K562 (cell line): ENCODE measurements at regions of chr14 and their contacts with region 1.

Region 1: DNA sequence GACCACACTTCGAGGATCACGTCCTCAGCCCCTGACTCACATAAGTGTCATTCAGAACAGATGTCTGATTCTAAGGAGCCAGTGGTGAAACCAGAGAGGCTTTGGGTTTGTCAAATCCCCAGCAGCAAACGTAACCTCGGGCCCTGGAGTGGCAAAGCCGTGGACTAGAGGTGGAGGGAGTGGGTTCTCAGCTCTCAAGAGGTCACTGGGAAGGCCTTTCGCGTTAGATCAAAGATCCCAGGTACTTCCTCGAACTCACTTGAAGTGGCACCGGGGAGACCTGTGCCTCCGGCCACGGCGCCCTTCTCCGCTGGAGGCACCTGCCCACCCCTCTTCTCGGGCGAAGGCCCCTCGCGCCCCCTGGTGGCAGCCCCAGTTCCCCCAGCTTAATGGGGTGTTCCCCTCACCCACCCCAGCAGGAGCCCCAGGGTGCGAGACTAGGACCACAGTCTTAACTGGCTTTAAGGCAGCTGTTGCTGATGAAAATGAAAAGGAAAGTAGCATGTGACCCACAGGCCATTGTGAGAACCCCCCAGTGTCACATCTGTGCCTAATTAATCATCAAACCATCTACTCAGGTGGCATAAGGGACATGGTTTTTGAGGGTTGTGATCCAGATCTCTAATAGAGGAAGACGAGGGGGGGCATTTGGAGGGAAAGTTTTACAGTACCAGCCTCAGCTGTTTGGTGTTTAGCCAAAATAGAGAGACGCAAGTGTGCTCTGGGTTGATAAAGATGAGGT is 672 bp upstream of the ESR2 start:
- DNase-seq: peak; percentile 71 to 75 (median 73)
- ATAC-seq: peak; percentile 93
- H3K4me3 ChIP-seq: peak overlapping the region; percentile 41
- H3K27ac ChIP-seq: no peak overlapping the region
- H3K4me1 ChIP-seq: peaks cover 0 to 12% of the 10 kb centered on the region in 2 experiments; a peak in 2 of 5 replicates
- H3K27me3 ChIP-seq: no peaks in the 10 kb centered on the region
- CTCF ChIP-seq: peak; percentile 73 to 86 (median 75)
- EP300 ChIP-seq: no peak
- POLR2A ChIP-seq: no peak
- RAD21 ChIP-seq: peak; percentile 83 to 88

Region 2: GRCh38 chr14:63795532-63795931 is 499.3 kb before region 1 on chr14:
- CTCF ChIA-PET with region 1: interaction called, 3 read pairs
- POLR2A ChIA-PET with region 1: no interaction called
- in situ Hi-C with region 1: loop called (anchors 10 kb)
- intact Hi-C with region 1: loop called (anchors 5 kb)
- DNase-seq: no peak
- ATAC-seq: no peak
- H3K4me3 ChIP-seq: no peak overlapping the region
- H3K27ac ChIP-seq: no peak overlapping the region
- H3K4me1 ChIP-seq: no peaks in the 10 kb centered on the region
- H3K27me3 ChIP-seq: no peaks in the 10 kb centered on the region
- CTCF ChIP-seq: no peak
- EP300 ChIP-seq: no peak
- POLR2A ChIP-seq: no peak
- RAD21 ChIP-seq: no peak

Region 3: DNA sequence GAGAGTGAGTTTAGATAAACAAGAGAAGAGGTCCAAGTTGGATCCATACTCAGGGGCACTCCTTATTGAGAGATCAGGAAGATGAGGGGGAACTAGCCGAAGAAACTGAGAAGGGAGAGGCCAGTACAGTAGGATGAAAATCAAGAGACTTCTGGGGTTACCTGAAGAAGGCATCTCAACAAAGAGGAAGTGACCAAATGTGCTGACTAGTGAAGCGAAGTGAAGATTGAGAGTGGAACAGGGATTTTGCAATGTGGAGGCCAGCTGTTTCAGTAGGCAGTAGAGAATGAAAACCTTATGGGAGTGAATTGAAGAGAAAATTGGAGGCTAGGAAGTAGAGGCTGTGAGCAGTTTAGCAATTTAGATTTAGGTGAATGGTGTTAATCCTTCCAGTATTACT is 289.0 kb before region 1 on chr14:
- CTCF ChIA-PET with region 1: no interaction called
- POLR2A ChIA-PET with region 1: no interaction called
- in situ Hi-C with region 1: loop called (anchors 25 kb)
- intact Hi-C with region 1: loop called (anchors 2 kb)
- DNase-seq: no peak
- ATAC-seq: no peak
- H3K4me3 ChIP-seq: no peak overlapping the region
- H3K27ac ChIP-seq: no peak overlapping the region
- H3K4me1 ChIP-seq: no peaks in the 10 kb centered on the region
- H3K27me3 ChIP-seq: no peaks in the 10 kb centered on the region; a peak in 1 of 5 replicates
- CTCF ChIP-seq: no peak
- EP300 ChIP-seq: no peak
- POLR2A ChIP-seq: no peak
- RAD21 ChIP-seq: no peak

Region 4: DNA sequence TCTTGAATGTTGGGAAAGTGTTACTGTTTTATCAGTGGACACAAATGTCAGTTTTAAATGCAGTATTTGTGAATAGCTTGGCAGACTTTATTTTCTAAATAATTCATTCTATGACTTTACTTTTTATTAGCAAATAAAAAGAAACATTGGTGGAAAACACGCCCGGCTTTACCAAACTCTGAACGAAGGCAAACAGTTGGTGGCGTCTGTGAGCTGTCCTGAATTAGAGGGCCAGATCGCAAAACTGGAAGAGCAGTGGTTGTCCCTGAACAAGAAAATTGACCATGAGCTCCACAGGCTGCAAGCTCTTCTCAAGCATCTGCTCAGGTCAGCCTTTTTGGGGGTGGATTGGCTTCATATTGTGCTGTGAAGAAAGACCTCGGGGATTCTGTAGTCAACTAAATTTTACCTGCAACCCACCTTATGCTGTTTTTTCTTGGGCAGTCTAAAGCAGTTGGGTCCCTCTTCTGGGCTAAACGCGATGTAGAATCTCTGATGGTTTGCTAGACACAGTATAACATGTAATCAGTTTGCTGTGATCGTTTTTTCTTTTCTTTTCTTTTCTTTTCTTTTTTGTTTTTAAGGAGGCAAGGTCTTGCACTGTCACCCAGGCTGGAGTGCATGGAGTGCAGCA is 157.1 kb before region 1 on chr14:
- CTCF ChIA-PET with region 1: interaction called, 3 read pairs
- POLR2A ChIA-PET with region 1: no interaction called
- in situ Hi-C with region 1: no loop called
- intact Hi-C with region 1: loop called (anchors 2 kb)
- DNase-seq: peak in 2 of 4 experiments; percentile 17 to 43
- ATAC-seq: peak; percentile 80
- H3K4me3 ChIP-seq: no peak overlapping the region
- H3K27ac ChIP-seq: no peak overlapping the region
- H3K4me1 ChIP-seq: no peaks in the 10 kb centered on the region
- H3K27me3 ChIP-seq: peaks cover 2 to 5% of the 10 kb centered on the region in 2 experiments; a peak in 4 of 5 replicates
- CTCF ChIP-seq: peak; percentile 36 to 57 (median 52); a peak in 5 of 6 replicates
- EP300 ChIP-seq: no peak
- POLR2A ChIP-seq: no peak
- RAD21 ChIP-seq: peak; percentile 59 to 68

Region 5: GRCh38 chr14:64159588-64159987 is 135.3 kb before region 1 on chr14:
- CTCF ChIA-PET with region 1: interaction called, 5 read pairs
- POLR2A ChIA-PET with region 1: no interaction called
- in situ Hi-C with region 1: loop called (anchors 10 kb)
- intact Hi-C with region 1: loop called (anchors 1 kb)
- DNase-seq: peak in 2 of 4 experiments; percentile 6 to 10
- ATAC-seq: 0 out of 3 replicates have a peak, but pooled peaks have one; percentile 41
- H3K4me3 ChIP-seq: no peak overlapping the region
- H3K27ac ChIP-seq: no peak overlapping the region
- H3K4me1 ChIP-seq: no peaks in the 10 kb centered on the region
- H3K27me3 ChIP-seq: peaks cover 3 to 5% of the 10 kb centered on the region in 2 experiments; a peak in 4 of 5 replicates
- CTCF ChIP-seq: peak in 2 of 3 experiments; percentile 44 to 53; a peak in 3 of 6 replicates
- EP300 ChIP-seq: no peak
- POLR2A ChIP-seq: no peak
- RAD21 ChIP-seq: peak; percentile 36 to 58; a peak in 2 of 4 replicates

Region 6: DNA sequence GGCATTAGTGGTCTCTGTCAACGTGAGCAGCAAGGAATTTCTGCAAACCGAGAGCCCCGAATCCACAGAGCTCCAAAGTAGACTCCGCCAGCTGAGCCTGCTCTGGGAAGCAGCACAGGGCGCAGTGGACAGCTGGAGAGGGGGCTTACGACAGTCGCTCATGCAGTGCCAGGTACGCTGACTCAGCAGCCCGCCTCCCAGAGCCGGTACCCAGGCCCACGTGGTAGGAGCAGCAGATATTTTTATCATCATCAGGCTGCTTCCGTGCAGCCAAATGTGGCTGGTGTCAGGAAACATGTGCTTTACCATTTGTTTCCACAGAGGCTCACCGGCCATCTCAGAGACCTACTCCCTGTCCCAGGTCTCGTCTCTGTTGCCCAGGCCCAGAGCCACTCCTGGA is 74.4 kb before region 1 on chr14:
- CTCF ChIA-PET with region 1: no interaction called
- POLR2A ChIA-PET with region 1: no interaction called
- in situ Hi-C with region 1: no loop called
- intact Hi-C with region 1: loop called (anchors 5 kb)
- DNase-seq: peak in 3 of 4 experiments; percentile 12 to 34 (median 12)
- ATAC-seq: peak; percentile 62
- H3K4me3 ChIP-seq: no peak overlapping the region
- H3K27ac ChIP-seq: no peak overlapping the region
- H3K4me1 ChIP-seq: peaks cover 4 to 7% of the 10 kb centered on the region in 2 experiments; a peak in 4 of 5 replicates
- H3K27me3 ChIP-seq: no peaks in the 10 kb centered on the region
- CTCF ChIP-seq: no peak
- EP300 ChIP-seq: no peak
- POLR2A ChIP-seq: no peak
- RAD21 ChIP-seq: no peak

Region 7: DNA sequence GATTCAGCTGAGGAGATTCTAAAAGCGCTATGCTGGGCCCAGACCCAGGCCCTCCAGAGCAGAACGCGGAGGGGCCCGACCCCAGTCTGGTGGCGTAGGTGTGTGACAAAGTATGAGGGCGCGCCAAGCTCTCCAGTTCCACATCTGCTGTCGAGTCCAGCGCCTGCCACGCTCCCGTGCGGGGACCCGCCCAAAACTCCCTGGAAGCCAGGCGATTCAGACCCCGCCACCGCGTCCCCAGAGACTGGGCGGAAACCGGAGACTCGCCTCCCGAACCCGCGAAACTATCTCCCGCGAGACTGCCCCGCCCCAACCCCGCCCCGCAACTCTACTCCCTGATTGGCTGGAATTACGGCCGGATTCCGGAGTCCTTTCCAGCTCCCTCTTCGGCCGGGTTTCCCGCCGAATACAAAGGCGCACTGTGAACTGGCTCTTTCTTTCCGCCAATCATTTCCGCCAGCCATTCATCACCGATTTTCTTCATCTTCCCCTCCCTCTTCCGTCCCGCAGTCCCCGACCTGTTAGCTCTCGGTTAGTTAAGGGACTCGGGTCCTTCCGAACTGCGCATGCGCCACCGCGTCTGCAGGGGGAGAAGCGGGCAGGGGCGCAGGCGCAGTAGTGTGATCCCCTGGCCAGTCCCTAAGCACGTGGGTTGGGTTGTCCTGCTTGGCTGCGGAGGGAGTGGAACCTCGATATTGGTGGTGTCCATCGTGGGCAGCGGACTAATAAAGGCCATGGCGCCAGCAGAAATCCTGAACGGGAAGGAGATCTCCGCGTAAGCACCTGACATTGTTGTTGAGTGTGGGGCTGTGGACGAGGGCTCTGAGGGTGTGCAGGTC is 93.1 kb after region 1 on chr14 and contains the start of gene MTHFD1:
- CTCF ChIA-PET with region 1: no interaction called
- POLR2A ChIA-PET with region 1: no interaction called
- in situ Hi-C with region 1: no loop called
- intact Hi-C with region 1: no loop called
- DNase-seq: peak; percentile 96 to 97 (median 96)
- ATAC-seq: peak; percentile 90
- H3K4me3 ChIP-seq: peak within 1 kb of the TSS; percentile 59
- H3K27ac ChIP-seq: peak within 1 kb of the TSS; percentile 94
- H3K4me1 ChIP-seq: peaks cover 9 to 20% of the 10 kb centered on the region in 2 experiments; a peak in 4 of 5 replicates
- H3K27me3 ChIP-seq: no peaks in the 10 kb centered on the region
- CTCF ChIP-seq: no peak
- EP300 ChIP-seq: no peak
- POLR2A ChIP-seq: peak; percentile 81
- RAD21 ChIP-seq: no peak
- polyA plus RNA-seq, gene MTHFD1: 90.9 to 147 TPM